ENCODE measurements at regions of chr3 and their contacts with region 1.

Region 1: GRCh38 chr3:188830893-188831292 is 340.9 kb upstream of the TPRG1 start:
- DNase-seq: no peak
- H3K4me3 Mint-ChIP-seq: no peak overlapping the region
- H3K27ac Mint-ChIP-seq: no peak overlapping the region
- H3K4me1 Mint-ChIP-seq: peaks cover 31% of the 10 kb centered on the region
- H3K27me3 Mint-ChIP-seq: no peaks in the 10 kb centered on the region

Region 2: DNA sequence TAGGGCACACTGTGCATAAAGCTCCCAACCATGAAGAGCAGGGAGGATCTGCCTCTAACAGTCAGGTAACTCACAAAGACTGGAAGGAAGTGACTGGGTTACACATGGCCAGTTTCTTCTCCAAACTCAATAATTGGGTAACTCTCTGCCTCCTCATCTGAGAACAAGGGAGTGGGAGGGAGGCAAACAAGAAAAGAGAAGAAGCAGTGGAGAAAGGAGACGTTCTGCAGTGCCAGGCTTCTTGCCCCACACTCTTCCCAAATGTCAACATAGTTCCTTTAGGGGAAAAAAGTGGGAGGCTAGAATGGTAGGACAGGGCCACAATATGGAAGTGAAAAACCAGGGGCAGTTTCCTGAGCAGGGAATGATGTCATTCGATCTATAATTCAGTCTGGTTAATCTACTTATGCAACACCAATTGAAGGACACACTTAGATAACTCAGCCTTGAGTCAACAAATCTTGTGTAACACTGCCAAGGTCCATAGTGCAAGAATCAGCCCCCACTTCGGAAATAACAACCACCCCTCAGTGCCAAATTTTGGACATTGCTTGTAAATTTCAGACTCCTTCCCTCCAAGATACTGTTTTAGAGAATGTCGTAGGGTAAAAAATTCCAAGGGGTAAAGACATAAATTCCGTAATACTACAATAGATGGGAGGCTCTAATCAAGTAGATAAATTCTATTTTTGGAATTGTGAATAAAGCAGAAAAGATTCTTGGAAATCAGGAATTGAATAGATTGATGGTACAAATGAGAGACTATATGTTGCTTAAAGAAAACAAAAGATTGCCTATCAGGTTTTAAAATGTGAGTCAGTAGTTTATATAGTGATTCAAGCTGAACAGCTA is 533.9 kb before region 1 on chr3:
- CTCF ChIA-PET with region 1: no interaction called
- POLR2A ChIA-PET with region 1: no interaction called
- intact Hi-C with region 1: no loop called
- DNase-seq: no peak
- H3K4me3 Mint-ChIP-seq: no peak overlapping the region
- H3K27ac Mint-ChIP-seq: peak overlapping the region; percentile 68
- H3K4me1 Mint-ChIP-seq: peaks cover 81% of the 10 kb centered on the region
- H3K27me3 Mint-ChIP-seq: no peaks in the 10 kb centered on the region

Region 3: GRCh38 chr3:188712248-188712924 is 118.5 kb before region 1 on chr3:
- CTCF ChIA-PET with region 1: no interaction called
- POLR2A ChIA-PET with region 1: no interaction called
- intact Hi-C with region 1: no loop called
- DNase-seq: no peak
- H3K4me3 Mint-ChIP-seq: no peak overlapping the region
- H3K27ac Mint-ChIP-seq: no peak overlapping the region
- H3K4me1 Mint-ChIP-seq: peaks cover 6% of the 10 kb centered on the region
- H3K27me3 Mint-ChIP-seq: no peaks in the 10 kb centered on the region

Region 4: DNA sequence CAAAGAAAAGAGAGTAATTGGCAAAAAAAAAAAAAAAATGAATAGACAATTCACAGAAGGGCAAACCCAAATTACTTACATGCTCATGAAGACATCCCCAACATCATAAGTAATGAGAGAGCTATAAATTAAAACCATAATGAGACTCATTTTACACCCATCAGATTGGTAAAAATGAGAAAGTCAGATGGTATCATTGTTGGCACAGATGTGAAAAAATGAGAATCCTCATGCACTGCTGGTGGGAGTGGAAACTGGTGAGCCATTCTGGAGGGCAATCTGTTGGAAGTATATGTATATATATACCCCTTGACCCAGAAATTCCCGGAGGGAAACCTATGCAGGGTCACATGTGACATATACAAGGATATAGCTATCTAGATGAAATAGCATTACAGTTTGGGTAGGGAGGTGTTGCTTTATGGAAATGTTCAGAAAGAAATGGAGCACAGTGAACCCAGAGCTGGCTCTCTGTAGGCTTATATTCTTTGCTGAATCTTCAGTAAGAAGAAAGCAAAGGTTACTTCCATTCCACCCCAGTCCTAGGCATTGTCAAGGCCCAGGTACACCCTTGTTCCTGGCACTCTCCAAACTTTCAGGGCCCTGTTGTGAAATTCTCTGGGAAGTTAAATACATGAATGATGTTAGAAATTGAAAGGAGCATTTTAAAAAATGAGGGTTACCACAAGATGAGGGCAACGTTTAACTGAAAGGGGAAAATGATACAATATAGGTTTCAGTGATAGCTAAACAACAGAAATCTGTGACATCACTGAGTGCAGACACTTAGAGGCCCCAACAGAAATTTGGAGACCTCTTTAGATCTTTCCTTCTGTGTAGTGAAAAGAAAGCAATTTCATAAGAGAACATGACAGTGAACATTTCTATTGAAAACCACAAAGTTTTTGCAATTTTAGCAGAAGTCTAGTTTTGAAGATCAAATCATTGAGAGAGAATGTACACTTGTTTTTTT is 208.2 kb after region 1 on chr3:
- CTCF ChIA-PET with region 1: no interaction called
- POLR2A ChIA-PET with region 1: no interaction called
- intact Hi-C with region 1: no loop called
- DNase-seq: peak; percentile 34
- H3K4me3 Mint-ChIP-seq: no peak overlapping the region
- H3K27ac Mint-ChIP-seq: peak overlapping the region; percentile 62
- H3K4me1 Mint-ChIP-seq: peaks cover 37% of the 10 kb centered on the region
- H3K27me3 Mint-ChIP-seq: no peaks in the 10 kb centered on the region

Region 5: GRCh38 chr3:189148081-189148507 is 317.2 kb after region 1 on chr3:
- CTCF ChIA-PET with region 1: no interaction called
- POLR2A ChIA-PET with region 1: no interaction called
- intact Hi-C with region 1: loop called (anchors 10 kb)
- DNase-seq: peak; percentile 77
- H3K4me3 Mint-ChIP-seq: no peak overlapping the region
- H3K27ac Mint-ChIP-seq: no peak overlapping the region
- H3K4me1 Mint-ChIP-seq: peaks cover 19% of the 10 kb centered on the region
- H3K27me3 Mint-ChIP-seq: no peaks in the 10 kb centered on the region